HEK293 (cell line): ENCODE measurements at regions of chr10 and their contacts with region 1.

Region 1: GRCh38 chr10:118543714-118544400 is 51.6 kb downstream of the PRLHR start:
- H3K4me3 ChIP-seq: no peak overlapping the region
- H3K27ac ChIP-seq: no peak overlapping the region
- H3K4me1 ChIP-seq: no peaks in the 10 kb centered on the region
- CTCF ChIP-seq: peak; percentile 81; the same call in 1 of the 2 replicates

Region 2: GRCh38 chr10:118373786-118374185 is 170.1 kb before region 1 on chr10:
- CTCF ChIA-PET with region 1: no interaction called
- POLR2A ChIA-PET with region 1: no interaction called
- H3K4me3 ChIP-seq: no peak overlapping the region
- H3K27ac ChIP-seq: no peak overlapping the region
- H3K4me1 ChIP-seq: no peaks in the 10 kb centered on the region
- CTCF ChIP-seq: no peak

Region 3: GRCh38 chr10:118531105-118531852 is 12.6 kb before region 1 on chr10:
- CTCF ChIA-PET with region 1: interaction called, 26 read pairs
- POLR2A ChIA-PET with region 1: no interaction called
- H3K4me3 ChIP-seq: no peak overlapping the region
- H3K27ac ChIP-seq: no peak overlapping the region
- H3K4me1 ChIP-seq: no peaks in the 10 kb centered on the region
- CTCF ChIP-seq: no peak

Region 4: DNA sequence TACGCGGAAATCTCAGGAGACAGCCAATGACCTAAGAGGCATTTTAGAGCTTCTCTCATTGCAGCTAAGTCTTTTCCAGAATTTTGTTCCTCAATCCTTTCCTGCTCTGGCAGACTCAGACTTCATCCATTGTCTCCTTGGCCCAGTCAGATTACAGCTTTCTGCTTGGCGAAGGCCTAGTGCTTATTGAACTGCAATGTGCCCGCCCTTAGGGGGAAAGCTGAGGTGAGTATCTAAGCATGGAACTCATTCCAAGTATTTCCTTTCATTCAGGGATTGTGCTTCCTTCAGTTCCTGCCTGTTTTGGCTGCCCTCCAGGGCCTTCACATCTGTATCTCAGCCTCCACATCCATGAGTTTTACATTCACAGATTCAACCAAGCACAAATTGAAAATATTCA is 14.1 kb after region 1 on chr10:
- CTCF ChIA-PET with region 1: interaction called, 12 read pairs
- POLR2A ChIA-PET with region 1: no interaction called
- H3K4me3 ChIP-seq: no peak overlapping the region
- H3K27ac ChIP-seq: no peak overlapping the region
- H3K4me1 ChIP-seq: no peaks in the 10 kb centered on the region
- CTCF ChIP-seq: no peak

Region 5: GRCh38 chr10:118851062-118852035 is 307.5 kb after region 1 on chr10:
- CTCF ChIA-PET with region 1: no interaction called
- POLR2A ChIA-PET with region 1: no interaction called
- H3K4me3 ChIP-seq: no peak overlapping the region
- H3K27ac ChIP-seq: no peak overlapping the region
- H3K4me1 ChIP-seq: no peaks in the 10 kb centered on the region
- CTCF ChIP-seq: no peak